ENCODE measurements at regions of chr17 and their contacts with region 1.

Region 1: DNA sequence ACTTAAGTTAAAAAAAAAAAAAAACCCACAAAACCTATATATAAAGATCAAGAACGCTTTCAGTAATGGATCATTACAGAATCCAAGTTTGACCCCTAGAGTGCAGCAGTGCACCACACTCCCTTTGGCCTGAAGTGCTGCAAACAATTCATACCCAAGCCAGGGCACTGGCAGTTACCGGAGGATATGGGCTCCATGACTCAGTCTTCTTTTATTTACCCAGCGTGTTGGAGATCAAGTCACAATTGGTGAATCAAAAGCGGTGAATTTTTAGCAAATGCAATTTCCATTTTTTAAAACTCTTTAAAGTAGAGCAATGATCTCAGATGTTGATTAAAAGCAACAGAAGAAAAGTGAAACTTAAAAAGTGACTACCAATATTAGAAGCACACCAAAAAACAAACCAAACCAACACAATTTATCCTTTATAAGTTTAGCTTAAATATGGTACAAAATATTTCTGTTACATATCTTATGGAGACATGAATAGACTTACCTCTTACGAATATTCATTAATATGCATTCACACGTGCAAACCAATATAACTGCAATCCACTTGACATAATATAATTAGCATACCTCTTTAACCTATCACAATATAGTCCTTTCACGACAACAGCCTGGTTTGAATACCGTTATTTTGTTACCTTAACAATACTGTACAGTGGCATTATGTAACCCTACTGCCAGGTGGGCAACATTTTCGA is 46.3 kb downstream of the ZNF652 start:
- DNase-seq: peak; percentile 68
- H3K4me3 ChIP-seq: no peak overlapping the region
- H3K27ac ChIP-seq: no peak overlapping the region
- H3K27me3 ChIP-seq: no peaks in the 10 kb centered on the region
- CTCF ChIP-seq: peak; percentile 86

Region 2: DNA sequence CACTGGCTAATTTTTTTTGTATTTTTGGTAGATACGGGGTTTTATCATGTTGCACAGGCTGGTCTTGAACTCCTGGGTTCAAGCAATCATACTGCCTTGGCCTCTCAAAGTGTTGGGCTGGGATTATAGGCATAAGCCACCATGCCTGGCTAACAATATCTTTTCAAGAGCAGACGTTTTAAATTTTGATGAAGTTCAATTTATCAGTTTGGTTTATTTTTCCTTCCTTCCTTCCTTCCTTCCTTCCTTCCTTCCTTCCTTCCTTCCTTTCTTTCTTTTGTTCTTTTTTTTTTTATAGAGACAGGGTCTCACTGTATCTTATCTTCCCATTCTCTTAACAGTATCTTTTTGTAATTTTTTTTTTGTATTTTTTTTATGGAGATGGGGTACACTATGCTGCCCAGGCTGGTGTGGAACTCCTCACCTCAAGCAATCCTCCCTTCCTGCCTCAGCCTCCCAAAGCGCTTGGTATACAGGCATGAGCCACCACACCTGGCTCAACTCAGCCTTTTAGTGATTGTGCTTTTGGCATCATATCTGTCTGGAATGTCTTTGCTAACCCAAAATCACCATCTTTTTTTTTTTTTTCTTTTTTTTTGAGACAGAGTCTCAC is 333.7 kb before region 1 on chr17:
- CTCF ChIA-PET with region 1: no interaction called
- POLR2A ChIA-PET with region 1: no interaction called
- DNase-seq: no peak
- H3K4me3 ChIP-seq: no peak overlapping the region
- H3K27ac ChIP-seq: no peak overlapping the region
- H3K27me3 ChIP-seq: peaks cover 2% of the 10 kb centered on the region
- CTCF ChIP-seq: no peak

Region 3: DNA sequence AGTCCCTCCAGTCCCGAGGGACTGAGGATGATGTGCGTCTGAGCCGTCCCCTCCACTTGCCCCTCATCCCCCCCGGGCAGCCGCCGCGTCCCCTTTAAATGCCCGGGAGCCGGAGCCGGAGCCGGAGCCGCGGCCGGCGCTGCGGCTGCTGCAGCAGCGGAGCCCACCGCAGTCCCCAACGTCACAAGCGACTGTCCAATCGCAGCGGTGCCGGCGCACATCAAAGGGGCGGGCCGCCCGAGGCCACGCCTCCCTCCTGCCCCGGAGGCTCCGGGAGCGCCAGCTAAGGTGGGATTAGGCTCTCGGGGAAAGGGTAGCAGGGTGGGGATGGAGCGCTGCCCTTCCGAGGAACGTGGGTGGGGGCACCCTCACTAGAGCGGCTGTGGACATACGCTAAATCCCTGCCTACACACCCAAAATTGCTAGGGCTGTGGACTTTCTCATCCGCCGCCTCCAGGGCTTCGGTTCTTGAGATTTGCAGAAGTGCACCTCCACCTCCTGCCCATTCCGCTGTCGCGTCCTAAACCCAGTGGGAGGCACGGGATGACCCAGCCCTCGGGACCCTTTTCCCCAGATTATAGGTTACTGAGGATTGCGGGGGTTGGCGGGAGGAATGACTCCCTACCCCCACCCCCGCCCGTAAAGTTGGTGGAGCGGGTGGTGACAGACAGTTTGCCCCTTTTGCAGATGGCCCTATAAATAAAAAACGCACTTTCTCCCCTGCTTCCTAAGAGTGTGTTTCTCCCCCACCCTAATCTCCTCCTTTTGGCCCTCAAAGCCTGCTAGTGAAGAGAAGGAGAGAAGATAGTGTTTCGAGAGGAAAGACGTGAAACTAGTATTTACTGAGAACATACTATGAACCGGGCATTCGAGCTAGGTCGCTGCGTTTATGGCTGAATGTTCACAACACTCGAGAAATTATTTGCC is 84.8 kb before region 1 on chr17 and contains the start of gene PHOSPHO1:
- CTCF ChIA-PET with region 1: no interaction called
- POLR2A ChIA-PET with region 1: no interaction called
- DNase-seq: peak; percentile 30
- H3K4me3 ChIP-seq: peak within 1 kb of the TSS; percentile 68
- H3K27ac ChIP-seq: no peak within 1 kb of the TSS
- H3K27me3 ChIP-seq: peaks cover 25% of the 10 kb centered on the region
- CTCF ChIP-seq: no peak
- polyA plus RNA-seq, gene PHOSPHO1: 0.05 and 0.09 TPM in 2 replicates

Region 4: DNA sequence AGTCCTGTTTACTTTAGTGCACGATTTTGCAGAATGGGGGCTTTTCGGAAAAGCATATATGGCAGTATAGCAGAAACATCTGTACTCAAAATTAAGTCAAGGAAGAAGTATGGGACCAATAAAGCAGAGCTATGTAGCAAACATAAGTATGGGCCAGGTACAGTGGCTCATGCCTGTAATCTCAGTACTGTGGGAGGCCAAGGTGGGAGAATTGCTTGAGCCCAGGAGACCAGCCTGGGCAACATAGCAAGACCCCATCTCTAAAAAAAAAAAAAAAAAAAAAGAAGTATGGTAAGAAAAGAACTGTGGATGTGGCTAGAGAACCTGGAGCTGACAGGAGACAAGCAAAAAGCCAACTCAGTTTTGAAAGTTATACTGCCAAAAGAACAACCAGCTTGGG is 10.3 kb after region 1 on chr17:
- CTCF ChIA-PET with region 1: interaction called, 16 read pairs
- POLR2A ChIA-PET with region 1: no interaction called
- DNase-seq: no peak
- H3K4me3 ChIP-seq: no peak overlapping the region
- H3K27ac ChIP-seq: no peak overlapping the region
- H3K27me3 ChIP-seq: no peaks in the 10 kb centered on the region
- CTCF ChIP-seq: no peak

Region 5: DNA sequence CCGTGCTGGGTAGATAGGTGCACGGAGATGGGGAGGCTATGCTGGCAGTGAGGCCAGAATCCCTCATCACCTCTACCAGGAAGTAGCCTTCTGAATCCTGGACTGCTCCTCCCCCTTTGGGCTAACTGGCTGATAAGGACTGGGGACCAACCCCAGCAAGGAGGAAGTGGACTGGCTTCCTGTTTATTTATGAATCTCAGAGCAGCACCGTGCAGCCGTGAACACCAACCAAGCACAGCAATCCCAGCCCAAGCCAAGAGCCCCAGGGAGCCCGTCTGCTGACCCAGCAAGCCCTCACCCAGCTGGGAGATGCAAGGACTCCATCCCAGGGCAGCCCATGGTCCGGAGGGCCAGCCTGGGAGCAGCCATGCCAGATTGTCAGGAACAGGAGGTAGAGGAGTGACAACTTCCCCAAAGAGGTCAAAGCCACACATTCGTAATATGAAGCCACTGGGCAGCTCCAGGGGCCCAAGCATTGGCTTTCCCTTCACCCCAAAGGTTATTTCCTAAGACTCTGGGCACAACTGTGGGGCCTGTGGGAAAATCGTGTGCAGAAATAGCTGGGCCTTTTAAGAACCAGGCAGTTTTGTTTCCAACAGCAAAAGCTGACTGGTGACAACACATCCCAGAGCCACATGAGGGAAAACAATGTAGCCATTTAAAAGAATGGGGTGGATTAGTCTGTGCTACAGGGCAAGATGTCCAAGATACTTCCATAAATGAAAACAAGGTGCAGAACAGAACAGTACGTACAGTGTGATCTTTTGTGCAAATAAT is 75.0 kb after region 1 on chr17:
- CTCF ChIA-PET with region 1: interaction called, 109 read pairs
- POLR2A ChIA-PET with region 1: no interaction called
- DNase-seq: no peak
- H3K4me3 ChIP-seq: no peak overlapping the region
- H3K27ac ChIP-seq: no peak overlapping the region
- H3K27me3 ChIP-seq: no peaks in the 10 kb centered on the region
- CTCF ChIP-seq: no peak

Region 6: DNA sequence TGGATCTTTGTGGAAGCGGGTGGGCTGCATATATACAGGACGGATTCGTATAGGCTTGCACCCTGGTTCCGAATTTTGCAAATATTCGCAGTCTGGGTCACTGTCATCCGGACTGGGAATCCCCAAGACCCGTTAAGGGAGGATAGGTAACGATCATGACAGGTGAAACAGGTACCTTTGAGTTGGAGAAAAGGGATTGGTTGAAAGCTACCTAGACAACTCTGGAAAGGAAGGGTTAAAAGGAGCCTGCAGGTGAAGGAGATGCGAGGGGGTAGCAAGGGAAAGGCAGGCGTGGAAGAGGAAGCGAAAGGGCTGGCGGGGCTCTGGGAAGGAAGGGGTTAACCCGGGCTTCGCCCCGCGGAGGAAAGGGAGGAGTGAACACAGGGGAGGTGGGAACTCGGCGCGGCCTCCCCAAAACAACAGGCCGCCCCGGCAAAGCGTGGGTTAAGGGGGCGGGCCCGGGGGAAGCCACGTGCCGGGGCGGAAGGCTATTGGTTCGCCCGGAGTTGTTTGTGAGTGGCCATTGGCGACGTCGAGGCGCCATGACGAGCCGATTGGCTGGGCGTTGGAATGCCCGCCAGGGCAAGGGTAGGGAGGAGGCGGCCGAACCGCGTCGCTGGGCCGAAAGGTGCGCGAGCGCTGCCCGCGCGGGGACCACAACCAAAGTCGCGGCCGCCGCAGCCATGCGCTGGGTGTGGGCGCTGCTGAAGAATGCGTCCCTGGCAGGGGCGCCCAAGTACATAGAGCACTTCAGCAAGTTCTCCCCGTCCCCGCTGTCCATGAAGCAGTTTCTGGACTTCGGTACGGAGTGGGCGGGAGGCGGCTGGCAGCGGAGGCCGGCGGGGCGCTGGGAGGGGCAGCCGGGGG is 779.3 kb after region 1 on chr17 and contains the start of gene PDK2:
- CTCF ChIA-PET with region 1: no interaction called
- POLR2A ChIA-PET with region 1: no interaction called
- DNase-seq: peak; percentile 87
- H3K4me3 ChIP-seq: peak within 1 kb of the TSS; percentile 83
- H3K27ac ChIP-seq: peak within 1 kb of the TSS; percentile 70
- H3K27me3 ChIP-seq: no peaks in the 10 kb centered on the region
- CTCF ChIP-seq: no peak
- polyA plus RNA-seq, gene PDK2: 62.4 and 81.7 TPM in 2 replicates

Measured in AG04450 (cell line).